GM12878 (cell line): ENCODE measurements at regions of chr5 and their contacts with region 1.

Region 1: DNA sequence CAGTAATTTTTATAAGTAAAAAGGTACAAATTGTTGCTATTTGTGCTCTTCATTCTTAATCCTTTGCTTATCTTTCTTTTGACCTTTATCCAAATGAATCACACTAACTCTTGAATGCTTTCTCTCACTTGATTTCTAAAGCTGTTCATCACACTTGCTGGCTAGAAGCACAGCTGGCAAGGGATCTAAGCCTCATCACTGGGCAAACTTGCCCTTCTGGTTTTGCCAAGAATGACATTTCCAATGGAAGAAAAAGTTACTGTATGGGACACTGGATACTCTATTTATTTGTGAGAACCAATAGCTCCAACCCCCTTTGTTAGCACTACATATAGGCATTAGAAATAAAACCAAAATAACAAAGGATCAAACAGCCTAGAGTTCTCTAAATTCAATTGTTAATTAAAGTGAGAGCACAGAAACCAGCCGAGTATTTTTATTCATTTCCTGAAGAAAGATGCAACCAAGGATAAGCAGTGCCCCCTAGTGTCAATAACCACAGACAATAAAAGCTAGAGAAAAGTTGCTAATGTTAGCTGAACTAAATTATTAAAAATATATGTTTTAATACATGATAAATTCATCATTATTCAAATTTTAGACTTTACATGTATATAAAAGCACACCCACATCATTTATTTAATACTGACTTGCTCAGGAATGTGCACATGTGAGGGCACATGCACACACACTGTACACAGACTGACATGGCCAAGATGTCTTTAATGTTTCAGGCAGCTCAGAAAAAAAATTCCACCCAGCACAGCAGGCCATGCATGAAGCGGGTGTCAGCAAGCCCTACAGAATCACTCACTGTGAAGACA is 59.8 kb upstream of the POU5F2 start:
- DNase-seq: peak; percentile 2
- ATAC-seq: peak; percentile 78
- H3K4me3 ChIP-seq: no peak overlapping the region
- H3K27ac ChIP-seq: no peak overlapping the region
- H3K4me1 ChIP-seq: peaks cover 3% of the 10 kb centered on the region; the same call in 1 of the 2 replicates
- H3K27me3 ChIP-seq: no peaks in the 10 kb centered on the region
- CTCF ChIP-seq: peak; percentile 49 to 68 (median 57)
- EP300 ChIP-seq: no peak
- POLR2A ChIP-seq: no peak
- RAD21 ChIP-seq: peak; percentile 91

Region 2: DNA sequence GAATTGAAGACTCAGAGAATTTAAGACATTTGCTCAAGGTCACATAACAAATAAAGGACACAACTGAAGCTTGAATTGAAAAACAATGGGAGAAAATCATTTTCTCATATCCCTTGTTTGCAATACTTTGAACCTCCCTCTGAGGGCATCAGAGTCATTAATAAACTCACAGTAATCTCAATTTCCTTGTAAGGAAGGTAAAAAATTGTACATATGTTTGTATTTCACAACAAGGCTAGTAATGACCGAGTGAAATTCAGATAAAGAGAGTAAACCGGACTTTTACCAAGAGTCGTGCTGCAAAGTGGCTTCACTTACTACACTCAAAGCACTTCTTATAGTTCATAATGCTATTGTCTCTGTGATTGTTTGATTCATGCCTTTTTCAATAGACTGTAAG is 885.2 kb before region 1 on chr5:
- CTCF ChIA-PET with region 1: no interaction called
- POLR2A ChIA-PET with region 1: no interaction called
- RAD21 ChIA-PET with region 1: no interaction called
- SMC1A ChIA-PET with region 1: no interaction called
- in situ Hi-C with region 1: no loop called
- intact Hi-C with region 1: loop called (anchors 10 kb)
- DNase-seq: no peak
- ATAC-seq: no peak
- H3K4me3 ChIP-seq: no peak overlapping the region
- H3K27ac ChIP-seq: no peak overlapping the region
- H3K4me1 ChIP-seq: no peaks in the 10 kb centered on the region
- H3K27me3 ChIP-seq: no peaks in the 10 kb centered on the region
- CTCF ChIP-seq: no peak; a peak in 1 of 6 replicates
- EP300 ChIP-seq: no peak
- POLR2A ChIP-seq: no peak
- RAD21 ChIP-seq: no peak

Region 3: GRCh38 chr5:93596676-93597461 is 204.3 kb before region 1 on chr5:
- CTCF ChIA-PET with region 1: interaction called, 17 read pairs
- POLR2A ChIA-PET with region 1: no interaction called
- RAD21 ChIA-PET with region 1: interaction called, 3 read pairs
- SMC1A ChIA-PET with region 1: interaction called, 21 read pairs
- in situ Hi-C with region 1: loop called (anchors 5 kb)
- intact Hi-C with region 1: no loop called
- DNase-seq: no peak
- ATAC-seq: peak; percentile 67
- H3K4me3 ChIP-seq: no peak overlapping the region
- H3K27ac ChIP-seq: no peak overlapping the region
- H3K4me1 ChIP-seq: no peaks in the 10 kb centered on the region
- H3K27me3 ChIP-seq: peaks cover 26 to 36% of the 10 kb centered on the region in 2 experiments
- CTCF ChIP-seq: 0 out of 6 replicates have a peak, but pooled peaks of 2 of the 3 experiments have one; percentile 10 to 11
- EP300 ChIP-seq: no peak
- POLR2A ChIP-seq: no peak
- RAD21 ChIP-seq: peak; percentile 26; the same call in 1 of the 2 replicates

Region 4: DNA sequence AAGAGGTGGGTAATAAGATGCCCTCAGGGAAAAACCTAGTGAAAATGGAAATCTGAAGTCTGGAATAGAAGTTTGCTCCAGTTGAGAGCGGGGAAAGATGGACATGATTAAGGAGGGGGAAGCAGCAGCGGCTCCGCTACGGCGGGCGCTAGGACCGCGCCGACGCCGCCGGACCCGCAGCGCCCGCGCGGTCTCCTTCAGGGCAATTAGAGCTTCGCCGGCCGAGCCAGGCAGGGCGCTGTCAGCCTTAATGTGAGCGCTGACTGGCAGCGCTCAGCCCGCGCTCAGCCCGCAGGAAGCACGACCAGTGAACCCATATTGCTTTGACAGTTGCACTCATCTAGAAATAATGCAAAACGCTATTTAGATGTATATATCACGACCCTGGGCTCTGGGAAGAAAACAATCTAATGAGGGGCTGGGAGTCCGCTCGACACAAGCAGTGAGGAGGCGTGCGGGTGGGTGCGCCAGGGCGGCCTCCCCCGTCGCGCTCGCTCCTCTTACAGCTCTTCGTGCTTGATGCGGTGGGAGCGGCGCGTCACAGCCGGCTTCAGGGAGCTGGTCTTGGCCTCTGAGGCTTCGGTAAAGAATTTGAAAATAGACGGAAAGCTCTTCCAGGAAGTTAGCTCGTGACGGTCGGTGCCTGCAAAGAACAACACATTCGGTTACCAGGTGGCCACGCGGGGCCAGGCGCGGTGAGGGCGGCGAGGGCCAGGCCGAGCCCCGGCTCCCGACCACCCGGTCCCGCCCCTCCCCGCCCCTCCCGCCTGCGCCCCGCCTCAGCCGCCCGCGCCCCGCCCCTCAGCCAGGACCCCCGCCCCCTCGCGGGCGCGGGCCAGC is 180.5 kb before region 1 on chr5:
- CTCF ChIA-PET with region 1: interaction called, 11 read pairs
- POLR2A ChIA-PET with region 1: no interaction called
- RAD21 ChIA-PET with region 1: interaction called, 11 read pairs
- SMC1A ChIA-PET with region 1: interaction called, 24 read pairs
- in situ Hi-C with region 1: no loop called
- intact Hi-C with region 1: no loop called
- DNase-seq: no peak
- ATAC-seq: peak; percentile 99
- H3K4me3 ChIP-seq: peak overlapping the region; percentile 86
- H3K27ac ChIP-seq: no peak overlapping the region
- H3K4me1 ChIP-seq: peaks cover 3% of the 10 kb centered on the region; the same call in 1 of the 2 replicates
- H3K27me3 ChIP-seq: no peaks in the 10 kb centered on the region
- CTCF ChIP-seq: peak in 2 of 3 experiments; percentile 11 to 34; a peak in 2 of 6 replicates
- EP300 ChIP-seq: no peak
- POLR2A ChIP-seq: no peak
- RAD21 ChIP-seq: peak; percentile 17; the same call in 1 of the 2 replicates

Region 5: DNA sequence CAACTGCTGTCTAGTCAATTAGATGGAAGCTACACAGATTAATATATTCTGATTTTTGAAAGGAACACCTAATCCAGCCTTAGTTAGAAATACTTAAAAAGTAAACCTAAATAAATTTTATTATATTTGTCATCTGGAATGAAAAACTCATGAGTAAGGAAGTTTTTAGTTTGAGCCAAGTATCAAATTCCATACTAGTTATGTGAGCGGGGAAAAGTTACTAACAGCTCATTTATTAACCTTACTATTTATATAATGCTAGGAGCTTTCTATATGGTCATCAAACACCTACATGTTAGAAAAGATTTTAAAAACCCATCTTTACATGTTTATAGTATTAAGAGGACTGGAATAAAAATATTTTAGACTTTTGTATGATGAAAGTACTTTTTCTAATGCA is 18.2 kb before region 1 on chr5:
- CTCF ChIA-PET with region 1: interaction called, 24 read pairs
- POLR2A ChIA-PET with region 1: no interaction called
- RAD21 ChIA-PET with region 1: interaction called, 6 read pairs
- SMC1A ChIA-PET with region 1: interaction called, 9 read pairs
- in situ Hi-C with region 1: no loop called
- intact Hi-C with region 1: no loop called
- DNase-seq: no peak
- ATAC-seq: no peak
- H3K4me3 ChIP-seq: no peak overlapping the region
- H3K27ac ChIP-seq: no peak overlapping the region
- H3K4me1 ChIP-seq: no peaks in the 10 kb centered on the region
- H3K27me3 ChIP-seq: no peaks in the 10 kb centered on the region
- CTCF ChIP-seq: no peak
- EP300 ChIP-seq: no peak
- POLR2A ChIP-seq: no peak
- RAD21 ChIP-seq: no peak

Region 6: GRCh38 chr5:93819666-93820065 is 18.5 kb after region 1 on chr5:
- CTCF ChIA-PET with region 1: interaction called, 28 read pairs
- POLR2A ChIA-PET with region 1: no interaction called
- RAD21 ChIA-PET with region 1: interaction called, 4 read pairs
- SMC1A ChIA-PET with region 1: interaction called, 14 read pairs
- in situ Hi-C with region 1: no loop called
- intact Hi-C with region 1: no loop called
- DNase-seq: no peak
- ATAC-seq: no peak
- H3K4me3 ChIP-seq: no peak overlapping the region
- H3K27ac ChIP-seq: no peak overlapping the region
- H3K4me1 ChIP-seq: no peaks in the 10 kb centered on the region
- H3K27me3 ChIP-seq: no peaks in the 10 kb centered on the region
- CTCF ChIP-seq: no peak
- EP300 ChIP-seq: no peak
- POLR2A ChIP-seq: no peak
- RAD21 ChIP-seq: no peak

Region 7: DNA sequence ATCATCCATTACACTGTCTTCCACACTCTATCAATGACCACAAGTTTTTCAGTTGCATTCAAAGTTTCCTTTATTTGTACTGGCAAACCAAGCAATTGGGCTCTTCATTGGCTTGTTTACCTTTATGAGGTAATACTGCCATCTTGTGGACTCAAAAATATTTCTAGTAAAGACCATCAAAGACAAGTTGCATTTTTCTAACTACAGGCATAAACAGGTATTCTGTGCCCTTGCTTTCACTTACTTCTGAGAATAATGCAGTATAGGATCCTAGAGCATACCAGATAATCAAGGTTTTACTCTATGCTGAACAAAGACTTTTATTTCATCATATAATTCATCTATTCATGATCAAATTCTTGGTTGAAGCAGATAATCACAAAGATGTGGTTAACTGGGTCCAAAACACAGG is 113.9 kb after region 1 on chr5:
- CTCF ChIA-PET with region 1: interaction called, 13 read pairs
- POLR2A ChIA-PET with region 1: no interaction called
- RAD21 ChIA-PET with region 1: no interaction called
- SMC1A ChIA-PET with region 1: interaction called, 7 read pairs
- in situ Hi-C with region 1: no loop called
- intact Hi-C with region 1: loop called (anchors 5 kb)
- DNase-seq: peak; percentile 5
- ATAC-seq: peak; percentile 71
- H3K4me3 ChIP-seq: no peak overlapping the region
- H3K27ac ChIP-seq: no peak overlapping the region
- H3K4me1 ChIP-seq: no peaks in the 10 kb centered on the region
- H3K27me3 ChIP-seq: no peaks in the 10 kb centered on the region
- CTCF ChIP-seq: peak; percentile 35 to 49 (median 48)
- EP300 ChIP-seq: no peak
- POLR2A ChIP-seq: no peak
- RAD21 ChIP-seq: peak; percentile 64